Left lung (tissue), 14 donors: ENCODE measurements at regions of chr22 and their contacts with region 1.

Region 1: DNA sequence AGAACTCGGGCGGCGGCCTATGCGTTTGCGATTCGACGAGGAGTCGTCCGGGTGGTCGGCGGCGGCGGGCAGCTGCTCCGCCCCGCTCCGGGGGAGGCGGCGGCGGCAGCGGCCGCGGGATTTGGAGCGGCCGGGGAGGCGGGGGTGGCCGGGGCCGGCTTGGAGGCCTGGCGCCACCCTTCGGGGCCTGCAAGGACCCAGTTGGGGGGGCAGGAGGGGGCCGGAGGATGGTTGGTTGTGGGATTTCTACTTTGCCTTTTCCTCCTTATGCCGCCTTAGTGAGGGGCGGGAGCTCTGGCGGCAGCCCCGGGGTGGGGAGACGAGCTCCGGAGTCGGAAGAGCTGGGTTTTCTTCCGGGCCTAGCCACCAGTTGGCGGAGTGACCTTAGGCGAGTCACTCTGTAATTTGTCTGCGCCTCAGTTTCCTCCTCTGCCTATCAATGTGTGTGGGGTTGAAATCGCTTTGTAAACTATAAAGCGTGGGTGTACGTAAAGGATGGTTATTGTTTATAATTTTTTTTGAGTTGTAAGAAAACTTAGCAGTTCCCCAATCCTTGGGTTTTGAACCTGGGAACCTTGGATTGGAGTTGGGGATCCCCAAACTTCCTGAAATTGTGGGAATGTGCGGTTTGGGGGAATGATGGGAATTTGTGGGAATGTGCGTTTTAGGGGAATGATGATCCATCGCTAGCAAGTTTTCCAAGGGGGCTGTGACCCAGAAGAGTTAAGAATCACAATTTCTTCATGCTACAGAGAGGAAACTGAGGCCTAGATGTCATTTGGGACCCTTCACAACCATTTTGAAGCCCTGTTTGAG is 683 bp downstream of the TUG1 start:
- DNase-seq: peak in 2 of 4 donors; percentile 30 to 52
- ATAC-seq: peak; percentile 46
- H3K4me3 ChIP-seq: peak overlapping the region; percentile 80
- H3K27ac ChIP-seq: peak overlapping the region; percentile 96 to 98
- H3K4me1 ChIP-seq: peaks cover 28 to 33% of the 10 kb centered on the region in 2 donors
- H3K27me3 ChIP-seq: no peaks in the 10 kb centered on the region
- CTCF ChIP-seq: no peak

Region 2: GRCh38 chr22:30802202-30803166 is 167.3 kb before region 1 on chr22:
- intact Hi-C with region 1: no loop called
- DNase-seq: peak; percentile 79 to 96 (median 92)
- ATAC-seq: peak; percentile 100
- H3K4me3 ChIP-seq: no peak overlapping the region
- H3K27ac ChIP-seq: no peak overlapping the region
- H3K4me1 ChIP-seq: peaks cover 6 to 12% of the 10 kb centered on the region in 2 donors
- H3K27me3 ChIP-seq: peaks cover 7 to 60% of the 10 kb centered on the region in 2 donors
- CTCF ChIP-seq: peak; percentile 20 to 73

Region 3: GRCh38 chr22:30816413-30816812 is 153.3 kb before region 1 on chr22:
- intact Hi-C with region 1: no loop called
- DNase-seq: no peak
- ATAC-seq: no peak
- H3K4me3 ChIP-seq: no peak overlapping the region
- H3K27ac ChIP-seq: no peak overlapping the region
- H3K4me1 ChIP-seq: no peaks in the 10 kb centered on the region
- H3K27me3 ChIP-seq: peaks cover 2 to 26% of the 10 kb centered on the region in 2 donors
- CTCF ChIP-seq: no peak

Region 4: GRCh38 chr22:31036671-31037550 is 67.2 kb after region 1 on chr22:
- intact Hi-C with region 1: loop called in 1 of 2 experiments (anchors 10 kb)
- DNase-seq: peak in 2 of 4 donors; percentile 71
- ATAC-seq: no peak
- H3K4me3 ChIP-seq: no peak overlapping the region
- H3K27ac ChIP-seq: peak overlapping the region in 1 of 2 donors; percentile 36
- H3K4me1 ChIP-seq: no peaks in the 10 kb centered on the region
- H3K27me3 ChIP-seq: no peaks in the 10 kb centered on the region
- CTCF ChIP-seq: no peak

Region 5: GRCh38 chr22:31122532-31123291 is 153.0 kb after region 1 on chr22 and contains the start of gene INPP5J:
- intact Hi-C with region 1: no loop called
- DNase-seq: peak in 2 of 4 donors; percentile 56 to 75
- ATAC-seq: peak; percentile 92
- H3K4me3 ChIP-seq: peak within 1 kb of the TSS; percentile 33 to 36
- H3K27ac ChIP-seq: no peak within 1 kb of the TSS
- H3K4me1 ChIP-seq: peaks cover 3 to 12% of the 10 kb centered on the region in 2 donors
- H3K27me3 ChIP-seq: no peaks in the 10 kb centered on the region
- CTCF ChIP-seq: no peak
- polyA plus RNA-seq, gene INPP5J: 2.1 to 4.1 (median 2.7) TPM